Colonic mucosa (tissue), 4 donors: ENCODE measurements at regions of chr6 and their contacts with region 1.

Region 1: GRCh38 chr6:8983188-8983688 is 547.9 kb upstream of the SLC35B3 start:
- DNase-seq: peak; percentile 63
- H3K4me3 ChIP-seq: no peak overlapping the region
- H3K27ac ChIP-seq: no peak overlapping the region
- H3K4me1 ChIP-seq: no peaks in the 10 kb centered on the region
- H3K27me3 ChIP-seq: no peaks in the 10 kb centered on the region
- CTCF ChIP-seq: peak; percentile 97

Region 2: GRCh38 chr6:8819446-8819845 is 163.8 kb before region 1 on chr6:
- intact Hi-C with region 1: no loop called
- DNase-seq: no peak
- H3K4me3 ChIP-seq: no peak overlapping the region
- H3K27ac ChIP-seq: no peak overlapping the region
- H3K4me1 ChIP-seq: no peaks in the 10 kb centered on the region
- H3K27me3 ChIP-seq: no peaks in the 10 kb centered on the region
- CTCF ChIP-seq: no peak

Region 3: DNA sequence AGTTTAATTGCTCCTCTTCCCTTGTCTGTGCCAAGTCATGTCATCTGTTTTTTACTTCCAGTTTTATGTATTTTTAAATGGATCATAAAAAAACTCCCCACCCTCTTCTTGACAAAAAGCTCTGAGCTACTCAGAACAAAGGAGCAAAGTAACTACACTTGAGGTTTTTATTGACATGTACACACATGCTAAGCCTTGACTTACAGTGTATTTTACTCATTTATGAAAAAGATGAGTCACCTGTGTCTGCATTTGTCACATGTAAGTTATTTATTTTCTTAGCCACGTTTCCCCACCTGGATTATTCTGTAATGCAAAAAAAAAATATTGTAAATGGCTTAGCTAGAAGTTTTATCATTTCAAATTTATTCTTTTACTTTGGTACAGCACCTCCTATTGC is 80.9 kb after region 1 on chr6:
- intact Hi-C with region 1: no loop called
- DNase-seq: no peak
- H3K4me3 ChIP-seq: no peak overlapping the region
- H3K27ac ChIP-seq: no peak overlapping the region
- H3K4me1 ChIP-seq: no peaks in the 10 kb centered on the region
- H3K27me3 ChIP-seq: no peaks in the 10 kb centered on the region
- CTCF ChIP-seq: no peak

Region 4: DNA sequence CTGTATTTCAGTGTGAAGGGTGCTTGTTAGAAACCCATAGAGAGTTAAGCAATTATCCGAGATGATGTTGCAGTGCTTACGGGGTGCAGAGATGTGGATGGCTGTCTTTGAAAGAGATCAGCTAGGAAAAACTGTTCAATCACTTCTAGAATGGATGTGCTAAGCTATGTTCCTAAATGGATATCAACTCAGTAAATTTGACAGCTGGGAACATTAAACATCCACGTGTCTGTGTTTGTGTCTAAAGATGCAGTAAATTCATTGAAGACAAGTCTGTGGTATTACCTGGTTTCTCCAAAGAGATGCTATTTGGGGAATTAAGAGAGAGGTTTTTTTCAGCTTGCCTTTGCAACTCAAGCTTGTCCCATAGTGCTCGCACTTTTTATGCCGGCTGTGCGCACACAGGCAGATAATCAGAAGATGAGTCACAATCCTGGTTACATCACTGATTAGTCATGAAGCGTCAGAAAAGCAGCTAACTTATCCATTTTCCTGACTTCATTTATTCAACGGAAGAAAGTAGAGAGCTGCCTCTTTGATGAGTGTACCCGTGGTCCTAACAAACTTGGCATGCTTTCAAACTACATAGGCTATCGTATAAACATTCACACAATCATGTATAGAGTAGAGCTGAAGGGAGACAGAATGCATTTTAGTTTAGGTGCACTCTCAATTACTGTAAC is 143.8 kb after region 1 on chr6:
- intact Hi-C with region 1: no loop called
- DNase-seq: no peak
- H3K4me3 ChIP-seq: no peak overlapping the region
- H3K27ac ChIP-seq: no peak overlapping the region
- H3K4me1 ChIP-seq: no peaks in the 10 kb centered on the region
- H3K27me3 ChIP-seq: no peaks in the 10 kb centered on the region
- CTCF ChIP-seq: no peak

Region 5: DNA sequence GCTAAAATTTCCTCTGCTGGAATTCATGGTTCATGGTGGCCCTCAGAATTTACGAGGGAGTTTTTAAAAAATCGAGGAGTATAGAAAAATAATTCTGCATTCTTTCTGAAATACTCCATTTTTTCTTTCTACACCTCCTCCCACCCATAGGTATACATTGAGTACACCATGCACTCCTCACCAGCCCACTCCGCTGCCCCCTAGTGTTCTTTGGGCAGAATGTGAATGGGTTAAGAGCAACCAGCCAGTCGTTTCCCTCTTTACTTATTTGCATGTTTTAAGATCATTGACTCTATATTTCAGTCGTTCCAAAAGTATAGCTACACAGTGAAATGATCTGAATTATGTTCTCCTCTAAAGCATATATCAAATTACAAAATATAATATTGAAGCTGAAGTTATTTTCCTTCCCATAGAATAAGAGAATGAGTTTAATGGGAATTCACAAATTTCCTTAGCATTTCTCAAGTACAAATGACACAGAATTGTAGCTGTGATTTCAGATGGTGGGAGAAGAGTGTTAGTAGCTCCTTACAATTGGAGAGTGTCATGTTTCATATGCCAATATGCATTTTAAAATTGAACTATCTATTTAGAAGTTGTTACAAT is 429.8 kb after region 1 on chr6:
- intact Hi-C with region 1: loop called (anchors 5 kb)
- DNase-seq: peak; percentile 24
- H3K4me3 ChIP-seq: no peak overlapping the region
- H3K27ac ChIP-seq: no peak overlapping the region
- H3K4me1 ChIP-seq: no peaks in the 10 kb centered on the region
- H3K27me3 ChIP-seq: no peaks in the 10 kb centered on the region
- CTCF ChIP-seq: peak; percentile 48